A549 (cell line): ENCODE measurements at regions of chr3 and their contacts with region 1.

Region 1: DNA sequence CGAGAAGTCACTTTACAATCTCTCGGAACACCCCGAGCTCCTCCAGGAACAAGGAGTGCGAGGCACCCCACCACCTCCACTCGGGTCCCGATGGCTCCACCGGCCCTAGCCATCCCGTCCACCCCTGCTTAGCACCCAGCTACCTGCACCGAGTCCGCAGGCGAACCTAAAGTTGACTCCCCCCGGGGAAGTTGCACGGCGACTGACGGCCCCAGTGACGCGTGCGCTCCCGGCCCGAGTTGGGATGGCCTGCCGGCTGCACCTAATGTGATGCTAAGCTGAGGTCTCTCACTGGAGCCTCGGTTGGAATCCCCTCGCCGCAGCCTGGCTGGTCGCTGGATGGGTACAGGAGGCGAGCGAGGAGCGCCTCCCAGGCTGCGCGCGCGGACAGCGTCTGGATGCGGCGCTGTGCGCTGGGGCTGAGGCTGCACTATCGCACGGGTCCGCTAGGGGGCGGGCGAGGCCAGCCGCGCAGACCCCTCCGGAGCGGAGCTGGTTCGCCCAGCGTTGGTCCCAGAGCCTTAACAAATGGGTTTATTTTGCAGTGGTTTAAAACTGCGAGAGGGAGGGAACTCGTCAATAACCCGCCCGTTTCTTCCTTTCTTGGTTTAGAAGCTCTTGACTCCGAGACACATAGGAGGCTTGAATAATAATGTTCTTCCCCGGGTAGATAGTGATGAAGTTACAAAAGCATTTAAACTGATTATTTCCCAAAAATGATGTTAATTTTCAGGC is at the start of gene OXTR:
- DNase-seq: peak; percentile 66 to 78
- ATAC-seq: peak; percentile 93 to 99
- H3K4me3 ChIP-seq: peak within 1 kb of the TSS; percentile 52
- H3K27ac ChIP-seq: peak within 1 kb of the TSS; percentile 68 to 83
- H3K4me1 ChIP-seq: no peaks in the 10 kb centered on the region
- CTCF ChIP-seq: peak; percentile 98
- EP300 ChIP-seq: no peak
- POLR2A ChIP-seq: no peak
- RAD21 ChIP-seq: peak; percentile 90 to 98
- polyA plus RNA-seq, gene OXTR: 2.1 TPM in 2 replicates

Region 2: GRCh38 chr3:8663177-8664061 is 105.8 kb before region 1 on chr3:
- CTCF ChIA-PET with region 1: interaction called, 22 read pairs
- POLR2A ChIA-PET with region 1: no interaction called
- DNase-seq: peak; percentile 79 to 82
- ATAC-seq: peak; percentile 67 to 88
- H3K4me3 ChIP-seq: no peak overlapping the region
- H3K27ac ChIP-seq: peak overlapping the region; percentile 8 to 61; a peak in 3 of 6 replicates
- H3K4me1 ChIP-seq: peaks cover 25% of the 10 kb centered on the region
- CTCF ChIP-seq: peak; percentile 66
- EP300 ChIP-seq: no peak
- POLR2A ChIP-seq: no peak
- RAD21 ChIP-seq: peak; percentile 69 to 73

Region 3: GRCh38 chr3:8755563-8756237 is 13.6 kb before region 1 on chr3:
- CTCF ChIA-PET with region 1: interaction called, 48 read pairs
- POLR2A ChIA-PET with region 1: no interaction called
- DNase-seq: peak; percentile 37 to 47
- ATAC-seq: peak; percentile 52 to 80; a peak in 4 of 6 replicates
- H3K4me3 ChIP-seq: no peak overlapping the region
- H3K27ac ChIP-seq: no peak overlapping the region
- H3K4me1 ChIP-seq: no peaks in the 10 kb centered on the region
- CTCF ChIP-seq: peak; percentile 30; the same call in 1 of the 3 replicates
- EP300 ChIP-seq: no peak
- POLR2A ChIP-seq: no peak
- RAD21 ChIP-seq: peak; percentile 21 to 42; a peak in 2 of 5 replicates

Region 4: GRCh38 chr3:8816106-8816505 is 46.9 kb after region 1 on chr3:
- CTCF ChIA-PET with region 1: interaction called, 13 read pairs
- POLR2A ChIA-PET with region 1: no interaction called
- DNase-seq: no peak
- ATAC-seq: no peak
- H3K4me3 ChIP-seq: no peak overlapping the region
- H3K27ac ChIP-seq: no peak overlapping the region
- H3K4me1 ChIP-seq: no peaks in the 10 kb centered on the region
- CTCF ChIP-seq: no peak
- EP300 ChIP-seq: no peak
- POLR2A ChIP-seq: no peak
- RAD21 ChIP-seq: no peak

Region 5: DNA sequence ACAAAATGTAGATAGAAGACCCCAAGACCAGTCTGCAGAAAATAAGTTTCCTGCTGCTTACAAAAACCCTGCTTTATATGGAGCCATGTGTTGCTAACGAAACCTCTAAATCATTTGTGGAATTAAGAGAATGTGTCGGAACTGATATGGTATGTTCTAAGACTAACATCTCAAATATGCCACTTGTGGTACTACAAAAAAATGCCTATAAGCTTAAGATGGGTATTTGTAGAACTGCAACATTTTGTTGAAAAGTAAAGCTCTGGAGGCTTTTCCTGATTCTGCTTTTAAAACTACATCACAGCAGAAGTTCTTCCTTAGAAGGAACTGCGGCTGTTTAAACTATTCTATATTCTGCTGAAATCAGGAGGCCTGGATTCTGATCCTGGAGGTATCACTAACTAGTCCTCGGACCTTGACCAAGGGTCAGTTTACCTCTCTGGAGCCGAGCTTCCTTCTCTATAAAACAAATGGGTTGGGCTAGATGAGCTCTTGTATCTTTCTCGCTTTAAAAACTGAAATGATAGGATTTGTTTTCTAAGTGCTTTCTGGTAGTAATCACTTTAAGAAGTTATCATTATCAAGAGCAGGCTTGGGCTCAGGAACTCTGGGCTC is 119.2 kb after region 1 on chr3:
- CTCF ChIA-PET with region 1: interaction called, 37 read pairs
- POLR2A ChIA-PET with region 1: no interaction called
- DNase-seq: no peak
- ATAC-seq: no peak
- H3K4me3 ChIP-seq: no peak overlapping the region
- H3K27ac ChIP-seq: no peak overlapping the region
- H3K4me1 ChIP-seq: no peaks in the 10 kb centered on the region
- CTCF ChIP-seq: no peak
- EP300 ChIP-seq: no peak
- POLR2A ChIP-seq: no peak
- RAD21 ChIP-seq: no peak

Region 6: DNA sequence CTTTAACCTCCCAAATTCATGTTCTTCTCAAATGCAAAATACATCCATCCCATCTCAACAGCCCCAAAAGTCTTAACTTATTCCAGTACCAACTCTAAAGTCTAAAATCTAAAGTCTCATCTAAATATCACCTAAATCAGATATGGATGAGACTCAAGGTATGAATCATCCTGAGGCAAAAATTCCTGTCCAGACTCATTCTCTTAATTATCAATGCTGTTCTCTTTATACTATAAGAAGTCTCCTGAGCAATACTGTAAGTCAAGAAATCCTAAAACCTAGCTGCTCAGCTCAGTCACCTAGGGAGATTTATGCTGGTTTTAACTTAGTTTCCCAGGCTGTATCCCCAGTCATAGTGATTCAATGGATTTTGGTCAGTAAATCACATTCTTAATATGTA is 182.9 kb after region 1 on chr3:
- CTCF ChIA-PET with region 1: interaction called, 13 read pairs
- POLR2A ChIA-PET with region 1: no interaction called
- DNase-seq: no peak
- ATAC-seq: no peak
- H3K4me3 ChIP-seq: no peak overlapping the region
- H3K27ac ChIP-seq: no peak overlapping the region
- H3K4me1 ChIP-seq: no peaks in the 10 kb centered on the region
- CTCF ChIP-seq: no peak
- EP300 ChIP-seq: no peak
- POLR2A ChIP-seq: no peak
- RAD21 ChIP-seq: no peak